B cell (primary cell): ENCODE measurements at regions of chr11 and their contacts with region 1.

Region 1: GRCh38 chr11:64846998-64847666 is 2.7 kb upstream of the CDC42BPG start:
- DNase-seq: peak; percentile 92
- ATAC-seq: peak; percentile 20
- H3K4me3 ChIP-seq: no peak overlapping the region
- H3K4me3 Mint-ChIP-seq: peak overlapping the region; percentile 63
- H3K27ac ChIP-seq: peak overlapping the region in 1 of 2 donors; percentile 25
- H3K27ac Mint-ChIP-seq: peak overlapping the region; percentile 75
- H3K4me1 ChIP-seq: peaks cover 53 to 69% of the 10 kb centered on the region in 2 donors
- H3K4me1 Mint-ChIP-seq: peaks cover 61% of the 10 kb centered on the region
- H3K27me3 ChIP-seq: no peaks in the 10 kb centered on the region
- H3K27me3 Mint-ChIP-seq: no peaks in the 10 kb centered on the region
- CTCF ChIP-seq: peak; percentile 97

Region 2: GRCh38 chr11:64472593-64473455 is 374.3 kb before region 1 on chr11:
- CTCF ChIA-PET with region 1: no interaction called
- POLR2A ChIA-PET with region 1: no interaction called
- intact Hi-C with region 1: no loop called
- DNase-seq: no peak
- ATAC-seq: no peak
- H3K4me3 ChIP-seq: no peak overlapping the region
- H3K4me3 Mint-ChIP-seq: no peak overlapping the region
- H3K27ac ChIP-seq: no peak overlapping the region
- H3K27ac Mint-ChIP-seq: no peak overlapping the region
- H3K4me1 ChIP-seq: no peaks in the 10 kb centered on the region
- H3K4me1 Mint-ChIP-seq: no peaks in the 10 kb centered on the region
- H3K27me3 ChIP-seq: no peaks in the 10 kb centered on the region
- H3K27me3 Mint-ChIP-seq: peaks cover 43% of the 10 kb centered on the region
- CTCF ChIP-seq: no peak

Region 3: DNA sequence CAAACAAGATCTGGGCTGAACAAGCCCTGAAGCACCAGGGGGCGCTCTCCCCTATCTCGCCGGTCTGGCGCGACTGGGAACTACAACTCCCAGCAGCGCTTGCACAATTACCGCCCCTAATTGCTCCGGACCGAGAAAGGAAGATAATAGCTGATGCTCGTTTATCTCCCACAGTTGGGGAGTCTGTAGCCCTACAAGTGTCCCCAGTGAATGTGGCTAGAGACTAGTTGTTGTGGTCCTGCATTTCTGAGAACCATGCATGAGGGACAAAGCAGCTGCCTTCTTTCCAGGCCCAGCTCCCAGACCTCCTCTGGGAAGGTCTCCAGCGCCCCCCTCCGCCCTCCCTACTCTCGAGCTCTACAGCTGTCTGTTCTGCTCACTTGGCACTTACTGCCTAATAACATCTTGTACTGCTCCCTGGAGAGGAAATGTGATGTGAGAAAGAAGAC is 158.6 kb before region 1 on chr11:
- CTCF ChIA-PET with region 1: interaction called, 11 read pairs
- POLR2A ChIA-PET with region 1: no interaction called
- intact Hi-C with region 1: no loop called
- DNase-seq: peak; percentile 94
- ATAC-seq: peak; percentile 95
- H3K4me3 ChIP-seq: peak overlapping the region; percentile 37 to 74 (median 63)
- H3K4me3 Mint-ChIP-seq: peak overlapping the region; percentile 88
- H3K27ac ChIP-seq: peak overlapping the region in 1 of 2 donors; percentile 5
- H3K27ac Mint-ChIP-seq: peak overlapping the region; percentile 88
- H3K4me1 ChIP-seq: peaks cover 14 to 23% of the 10 kb centered on the region in 2 donors
- H3K4me1 Mint-ChIP-seq: peaks cover 20% of the 10 kb centered on the region
- H3K27me3 ChIP-seq: peaks cover 0 to 18% (median 8%) of the 10 kb centered on the region in 4 experiments
- H3K27me3 Mint-ChIP-seq: peaks cover 15% of the 10 kb centered on the region
- CTCF ChIP-seq: peak; percentile 92

Region 4: DNA sequence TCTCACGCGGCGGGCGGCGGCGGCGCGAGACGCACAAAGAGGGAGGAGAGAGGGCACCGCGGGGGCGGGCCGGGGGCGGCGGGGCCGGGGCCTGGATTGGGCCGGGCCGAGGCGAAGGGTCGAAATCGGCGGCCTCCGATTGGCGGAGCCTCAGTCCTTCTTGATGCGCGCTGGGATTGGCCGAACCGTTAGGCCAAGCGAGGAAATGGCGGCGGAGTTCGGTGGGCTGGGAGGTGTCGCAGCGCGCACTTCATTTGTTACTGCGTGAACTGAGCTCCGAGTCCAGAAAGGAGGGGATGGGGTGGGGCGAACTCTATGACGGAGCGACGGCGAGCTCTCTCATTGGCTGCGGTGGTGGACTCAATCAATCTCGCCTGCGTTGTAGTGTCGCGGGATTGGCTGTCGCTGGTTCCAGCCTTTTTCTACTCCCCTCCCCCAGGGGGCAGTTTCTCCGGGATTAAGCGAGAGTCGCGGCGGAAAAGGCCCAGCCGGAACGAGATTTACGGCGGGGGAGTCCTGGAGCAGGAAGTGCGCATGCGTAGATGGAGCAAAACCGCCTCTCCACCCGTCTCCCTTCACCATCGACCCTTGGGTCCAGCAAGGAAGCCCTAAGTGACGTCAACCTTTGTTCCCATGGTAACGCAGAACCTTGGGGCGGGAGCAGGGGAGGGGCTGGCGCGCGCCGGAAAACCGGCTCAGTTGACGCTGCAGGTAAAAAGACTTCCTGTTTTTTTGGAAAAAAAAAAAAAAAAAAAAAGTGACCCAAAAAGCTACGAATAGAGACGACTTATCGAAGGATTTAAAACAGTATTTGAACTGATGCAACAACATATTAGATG is 68.4 kb before region 1 on chr11 and contains the start of gene SF1:
- CTCF ChIA-PET with region 1: interaction called, 10 read pairs
- POLR2A ChIA-PET with region 1: interaction called, 13 read pairs
- intact Hi-C with region 1: loop called (anchors 2 kb)
- DNase-seq: peak; percentile 100
- ATAC-seq: peak; percentile 82
- H3K4me3 ChIP-seq: peak within 1 kb of the TSS; percentile 79 to 92 (median 82)
- H3K4me3 Mint-ChIP-seq: peak within 1 kb of the TSS; percentile 95
- H3K27ac ChIP-seq: peak within 1 kb of the TSS; percentile 95 to 98
- H3K27ac Mint-ChIP-seq: peak within 1 kb of the TSS; percentile 99
- H3K4me1 ChIP-seq: peaks cover 60 to 71% of the 10 kb centered on the region in 2 donors
- H3K4me1 Mint-ChIP-seq: peaks cover 73% of the 10 kb centered on the region
- H3K27me3 ChIP-seq: no peaks in the 10 kb centered on the region
- H3K27me3 Mint-ChIP-seq: no peaks in the 10 kb centered on the region
- CTCF ChIP-seq: no peak
- total RNA-seq, gene SF1: 914 and 931 TPM in 2 replicates

Region 5: DNA sequence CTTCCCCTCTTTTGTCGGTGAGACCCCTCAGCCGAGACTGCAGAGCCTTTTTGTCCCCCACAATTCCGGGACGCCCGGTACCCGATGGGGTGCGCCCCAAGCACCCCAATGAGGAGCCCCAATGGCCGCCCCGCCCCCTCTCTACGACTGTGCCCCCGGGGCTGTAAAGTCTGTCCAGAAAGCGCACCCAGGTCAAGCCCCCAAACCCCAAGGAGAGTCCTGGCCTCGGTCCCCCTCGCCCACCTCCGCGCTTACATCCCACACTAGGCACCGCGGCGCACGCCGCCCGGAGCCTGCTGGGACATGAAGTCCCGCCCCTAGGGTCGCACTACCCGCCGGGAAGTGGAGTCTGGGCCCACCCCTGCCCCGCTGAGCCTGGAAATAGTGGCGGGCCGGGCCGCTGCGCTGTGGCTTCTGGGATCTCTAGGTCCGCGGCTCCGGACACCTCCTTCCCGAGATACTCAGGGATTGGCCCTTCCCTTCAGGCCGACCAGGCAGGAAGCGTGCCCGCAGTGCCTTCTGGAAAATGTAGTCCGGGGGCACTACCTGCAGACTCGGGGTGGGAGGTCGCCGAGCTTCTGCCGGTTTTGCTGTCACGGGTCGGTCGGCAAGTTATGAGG is 36.8 kb before region 1 on chr11 and contains the start of gene MEN1:
- CTCF ChIA-PET with region 1: interaction called, 5 read pairs
- POLR2A ChIA-PET with region 1: interaction called, 15 read pairs
- intact Hi-C with region 1: loop called (anchors 2 kb)
- DNase-seq: peak; percentile 82
- ATAC-seq: peak; percentile 84
- H3K4me3 ChIP-seq: peak within 1 kb of the TSS; percentile 36 to 99 (median 86)
- H3K4me3 Mint-ChIP-seq: peak within 1 kb of the TSS; percentile 98
- H3K27ac ChIP-seq: peak within 1 kb of the TSS; percentile 63 to 79
- H3K27ac Mint-ChIP-seq: peak within 1 kb of the TSS; percentile 95
- H3K4me1 ChIP-seq: peaks cover 15 to 32% of the 10 kb centered on the region in 2 donors
- H3K4me1 Mint-ChIP-seq: peaks cover 34% of the 10 kb centered on the region
- H3K27me3 ChIP-seq: no peaks in the 10 kb centered on the region
- H3K27me3 Mint-ChIP-seq: no peaks in the 10 kb centered on the region
- CTCF ChIP-seq: no peak
- total RNA-seq, gene MEN1: 46.3 and 48.2 TPM in 2 replicates

Region 6: DNA sequence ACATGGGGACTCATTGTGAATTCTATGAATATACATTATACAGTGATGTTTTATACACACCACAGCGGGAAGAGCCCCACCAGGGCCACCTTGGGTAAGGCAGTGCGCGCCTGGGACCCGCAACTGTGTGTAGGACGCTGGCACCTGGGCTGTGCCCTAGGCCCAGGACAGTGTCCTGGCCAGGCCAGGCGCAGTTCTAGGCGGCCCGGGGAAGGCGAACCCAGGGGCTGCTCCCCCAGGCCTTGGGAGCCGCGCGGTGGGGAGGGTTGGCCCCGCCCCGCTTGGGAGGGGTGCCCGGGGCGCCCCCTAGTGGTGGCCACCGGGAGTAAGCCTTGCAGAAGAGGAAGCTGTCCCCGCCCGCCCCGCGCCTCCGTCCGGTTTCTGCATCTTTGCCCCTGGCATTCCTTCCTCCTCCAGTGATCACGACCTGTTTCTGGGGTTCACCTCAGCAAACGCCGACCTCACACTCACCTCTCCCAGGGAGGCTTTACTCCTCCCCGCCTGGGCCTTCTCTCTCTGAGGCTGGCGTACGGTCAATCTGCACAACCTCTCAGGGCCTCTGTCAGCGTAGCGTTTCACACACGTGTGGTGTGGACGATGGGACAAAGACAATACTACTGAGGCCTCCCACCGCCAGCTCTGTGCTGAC is 40.7 kb after region 1 on chr11:
- CTCF ChIA-PET with region 1: interaction called, 1,254 read pairs
- POLR2A ChIA-PET with region 1: interaction called, 43 read pairs
- intact Hi-C with region 1: loop called (anchors 1 kb)
- DNase-seq: peak; percentile 90
- ATAC-seq: peak; percentile 97
- H3K4me3 ChIP-seq: peak overlapping the region in 4 of 5 experiments; percentile 14 to 50 (median 42)
- H3K4me3 Mint-ChIP-seq: peak overlapping the region; percentile 84
- H3K27ac ChIP-seq: peak overlapping the region; percentile 43 to 56
- H3K27ac Mint-ChIP-seq: peak overlapping the region; percentile 88
- H3K4me1 ChIP-seq: peaks cover 25 to 33% of the 10 kb centered on the region in 2 donors
- H3K4me1 Mint-ChIP-seq: peaks cover 34% of the 10 kb centered on the region
- H3K27me3 ChIP-seq: no peaks in the 10 kb centered on the region
- H3K27me3 Mint-ChIP-seq: no peaks in the 10 kb centered on the region
- CTCF ChIP-seq: peak; percentile 91

Region 7: GRCh38 chr11:64947208-64947814 is 100.2 kb after region 1 on chr11:
- CTCF ChIA-PET with region 1: no interaction called
- POLR2A ChIA-PET with region 1: no interaction called
- intact Hi-C with region 1: no loop called
- DNase-seq: no peak
- ATAC-seq: no peak
- H3K4me3 ChIP-seq: no peak overlapping the region
- H3K4me3 Mint-ChIP-seq: no peak overlapping the region
- H3K27ac ChIP-seq: no peak overlapping the region
- H3K27ac Mint-ChIP-seq: no peak overlapping the region
- H3K4me1 ChIP-seq: peaks cover 0 to 4% of the 10 kb centered on the region in 2 donors
- H3K4me1 Mint-ChIP-seq: no peaks in the 10 kb centered on the region
- H3K27me3 ChIP-seq: peaks cover 0 to 3% (median 0%) of the 10 kb centered on the region in 4 experiments
- H3K27me3 Mint-ChIP-seq: peaks cover 17% of the 10 kb centered on the region
- CTCF ChIP-seq: no peak

Region 8: DNA sequence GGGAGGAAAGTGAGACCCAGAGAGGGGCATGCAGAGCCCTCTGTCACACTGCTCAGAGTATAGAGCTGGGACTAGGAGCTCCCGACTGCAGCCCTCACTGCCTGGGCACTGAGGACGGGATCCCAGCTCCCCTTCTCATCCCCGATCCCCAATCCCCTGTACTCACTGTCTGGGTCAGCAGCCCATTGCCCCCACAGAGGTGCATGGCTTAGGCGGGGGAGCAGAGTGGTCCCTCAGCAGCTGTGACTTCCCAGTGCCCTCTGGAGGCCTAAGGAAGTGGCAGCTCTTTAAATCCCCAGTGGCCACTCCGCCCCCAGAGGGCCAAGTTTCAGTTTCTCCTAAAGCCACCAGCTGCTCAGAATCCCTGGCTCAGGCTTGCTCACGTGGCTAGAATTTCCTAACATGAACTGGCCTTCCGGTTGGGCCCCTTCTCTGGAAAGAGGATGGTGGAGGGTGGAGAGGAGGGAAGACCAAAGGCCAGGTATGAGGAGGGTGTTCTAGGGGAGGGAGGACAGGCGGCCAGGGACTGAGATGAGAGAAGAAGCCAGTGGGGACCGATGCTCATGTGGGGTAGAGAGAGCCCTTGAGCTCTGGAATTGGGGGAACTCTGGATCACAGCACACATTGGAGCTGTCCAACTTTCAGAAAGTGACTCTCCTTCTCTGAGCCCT is 149.7 kb after region 1 on chr11 and contains the start of gene BATF2:
- CTCF ChIA-PET with region 1: interaction called, 19 read pairs
- POLR2A ChIA-PET with region 1: no interaction called
- intact Hi-C with region 1: no loop called
- DNase-seq: peak; percentile 73
- ATAC-seq: peak; percentile 90
- H3K4me3 ChIP-seq: peak within 1 kb of the TSS in 4 of 5 experiments; percentile 42 to 67 (median 53)
- H3K4me3 Mint-ChIP-seq: peak within 1 kb of the TSS; percentile 77
- H3K27ac ChIP-seq: peak within 1 kb of the TSS in 1 of 2 donors; percentile 60
- H3K27ac Mint-ChIP-seq: peak within 1 kb of the TSS; percentile 74
- H3K4me1 ChIP-seq: peaks cover 15 to 17% of the 10 kb centered on the region in 2 donors
- H3K4me1 Mint-ChIP-seq: peaks cover 26% of the 10 kb centered on the region
- H3K27me3 ChIP-seq: no peaks in the 10 kb centered on the region
- H3K27me3 Mint-ChIP-seq: no peaks in the 10 kb centered on the region
- CTCF ChIP-seq: peak; percentile 25
- total RNA-seq, gene BATF2: 0.51 and 0.62 TPM in 2 replicates